ENCODE measurements at regions of chr4 and their contacts with region 1.

Region 1: GRCh38 chr4:83034630-83035494 is at the start of gene COPS4:
- DNase-seq: peak; percentile 90 to 98
- H3K4me3 ChIP-seq: peak within 1 kb of the TSS; percentile 82
- H3K27ac ChIP-seq: peak within 1 kb of the TSS; percentile 88
- H3K4me1 ChIP-seq: peaks cover 4% of the 10 kb centered on the region
- H3K27me3 ChIP-seq: no peaks in the 10 kb centered on the region
- CTCF ChIP-seq: peak; percentile 31; the same call in 1 of the 2 replicates
- total RNA-seq, gene COPS4: 15.4 and 17.1 TPM in 2 replicates

Region 2: GRCh38 chr4:82284858-82285805 is 749.7 kb before region 1 on chr4:
- CTCF ChIA-PET with region 1: no interaction called
- POLR2A ChIA-PET with region 1: interaction called, 18 read pairs
- intact Hi-C with region 1: no loop called
- DNase-seq: peak; percentile 93 to 97
- H3K4me3 ChIP-seq: peak overlapping the region; percentile 64
- H3K27ac ChIP-seq: no peak overlapping the region
- H3K4me1 ChIP-seq: no peaks in the 10 kb centered on the region
- H3K27me3 ChIP-seq: no peaks in the 10 kb centered on the region
- CTCF ChIP-seq: peak; percentile 89

Region 3: GRCh38 chr4:82373816-82374625 is 660.8 kb before region 1 on chr4 and contains the start of gene HNRNPD:
- CTCF ChIA-PET with region 1: no interaction called
- POLR2A ChIA-PET with region 1: interaction called, 3 read pairs
- intact Hi-C with region 1: loop called (anchors 10 kb)
- DNase-seq: peak; percentile 93 to 94
- H3K4me3 ChIP-seq: peak within 1 kb of the TSS; percentile 96
- H3K27ac ChIP-seq: peak within 1 kb of the TSS; percentile 95
- H3K4me1 ChIP-seq: peaks cover 31% of the 10 kb centered on the region
- H3K27me3 ChIP-seq: no peaks in the 10 kb centered on the region
- CTCF ChIP-seq: no peak
- total RNA-seq, gene HNRNPD: 165 and 221 TPM in 2 replicates

Region 4: GRCh38 chr4:82948647-82949204 is 86.1 kb before region 1 on chr4:
- CTCF ChIA-PET with region 1: no interaction called
- POLR2A ChIA-PET with region 1: interaction called, 31 read pairs
- intact Hi-C with region 1: no loop called
- DNase-seq: no peak
- H3K4me3 ChIP-seq: no peak overlapping the region
- H3K27ac ChIP-seq: no peak overlapping the region
- H3K4me1 ChIP-seq: no peaks in the 10 kb centered on the region
- H3K27me3 ChIP-seq: no peaks in the 10 kb centered on the region
- CTCF ChIP-seq: no peak

Region 5: DNA sequence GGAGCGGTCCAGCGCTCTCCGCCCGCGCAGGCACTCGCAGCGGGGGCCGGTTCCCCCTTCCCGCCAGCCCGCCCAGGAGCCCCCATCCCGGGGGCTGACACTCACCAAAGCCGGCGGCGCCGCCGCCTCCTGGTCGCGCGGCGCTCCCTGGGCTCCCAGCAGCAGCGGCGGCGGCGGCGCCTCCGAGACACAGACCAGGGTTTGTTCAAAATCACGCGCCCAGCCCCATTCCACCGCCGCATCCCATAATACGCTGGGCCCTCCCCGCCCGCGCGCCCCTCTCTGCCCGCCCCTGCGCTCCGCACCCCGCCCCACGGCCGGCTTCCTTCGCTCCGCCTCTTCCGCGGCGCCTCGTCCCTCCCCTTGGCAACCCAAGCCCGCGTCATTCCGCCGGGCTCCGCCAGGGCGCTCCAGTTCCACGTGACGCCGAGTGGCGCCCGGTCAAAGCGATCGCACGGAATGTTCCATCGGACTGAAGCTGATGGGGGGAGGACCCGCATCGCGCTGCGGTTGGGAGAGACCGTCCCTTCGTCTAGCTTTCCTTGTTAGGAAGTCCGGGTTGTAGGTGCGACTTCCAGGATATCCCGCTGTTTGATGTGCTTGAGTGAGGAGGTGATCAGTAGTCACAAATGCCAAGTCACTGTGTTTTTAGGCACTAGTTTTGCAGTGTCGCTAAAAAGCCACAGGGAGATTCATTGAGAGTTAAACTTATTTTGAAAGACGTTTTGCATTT is 22.0 kb before region 1 on chr4:
- CTCF ChIA-PET with region 1: interaction called, 5 read pairs
- POLR2A ChIA-PET with region 1: interaction called, 15 read pairs
- intact Hi-C with region 1: loop called (anchors 1 kb)
- DNase-seq: peak; percentile 90 to 94
- H3K4me3 ChIP-seq: peak overlapping the region; percentile 83
- H3K27ac ChIP-seq: peak overlapping the region; percentile 81
- H3K4me1 ChIP-seq: peaks cover 32% of the 10 kb centered on the region
- H3K27me3 ChIP-seq: no peaks in the 10 kb centered on the region
- CTCF ChIP-seq: no peak

Region 6: DNA sequence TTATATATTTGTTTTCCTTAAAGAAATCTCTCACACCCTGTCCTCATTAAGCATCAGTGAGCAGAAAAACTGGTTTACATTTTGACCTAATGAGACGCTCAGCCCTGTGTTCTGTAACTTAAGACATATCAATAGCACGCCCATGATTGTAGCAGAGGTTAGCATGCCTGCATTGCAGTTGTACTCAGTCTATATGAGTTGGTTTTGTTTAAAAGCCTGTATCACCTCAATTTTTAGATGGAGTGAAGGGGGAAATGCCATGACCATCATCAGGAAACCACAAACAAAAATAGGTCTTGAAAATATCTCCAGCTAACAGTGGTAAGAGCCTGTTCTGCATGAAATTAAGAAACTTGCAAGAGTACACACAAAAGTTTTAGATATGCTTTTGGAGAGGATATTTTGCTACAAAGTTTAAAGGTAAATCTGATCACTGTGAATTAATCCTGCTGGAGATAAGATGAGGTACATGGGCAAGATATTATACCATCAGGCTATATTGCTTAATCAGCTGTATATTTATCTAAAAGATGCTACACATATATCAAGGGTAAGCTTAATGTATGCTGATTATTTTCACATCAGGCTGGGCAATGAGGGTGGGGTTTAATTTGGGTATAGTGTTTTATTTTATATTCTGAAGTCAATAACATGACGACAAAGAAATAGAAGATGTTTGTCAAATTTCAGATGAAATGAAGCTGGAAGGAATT is 262.8 kb after region 1 on chr4:
- CTCF ChIA-PET with region 1: no interaction called
- POLR2A ChIA-PET with region 1: no interaction called
- intact Hi-C with region 1: no loop called
- DNase-seq: no peak
- H3K4me3 ChIP-seq: no peak overlapping the region
- H3K27ac ChIP-seq: no peak overlapping the region
- H3K4me1 ChIP-seq: no peaks in the 10 kb centered on the region
- H3K27me3 ChIP-seq: no peaks in the 10 kb centered on the region
- CTCF ChIP-seq: no peak

Region 7: GRCh38 chr4:83455281-83456129 is 420.6 kb after region 1 on chr4 and contains the starts of genes HELQ and MRPS18C:
- CTCF ChIA-PET with region 1: interaction called, 11 read pairs
- POLR2A ChIA-PET with region 1: interaction called, 3 read pairs
- intact Hi-C with region 1: loop called (anchors 10 kb)
- DNase-seq: peak; percentile 87 to 91
- H3K4me3 ChIP-seq: peak within 1 kb of the TSS; percentile 91
- H3K27ac ChIP-seq: peak within 1 kb of the TSS; percentile 76
- H3K4me1 ChIP-seq: peaks cover 14% of the 10 kb centered on the region
- H3K27me3 ChIP-seq: no peaks in the 10 kb centered on the region
- CTCF ChIP-seq: peak; percentile 47; the same call in 1 of the 2 replicates
- total RNA-seq, gene HELQ: 7.0 and 10.6 TPM in 2 replicates
- total RNA-seq, gene MRPS18C: 18.6 and 37.8 TPM in 2 replicates

Region 8: GRCh38 chr4:83548151-83548905 is 513.5 kb after region 1 on chr4:
- CTCF ChIA-PET with region 1: no interaction called
- POLR2A ChIA-PET with region 1: interaction called, 31 read pairs
- intact Hi-C with region 1: no loop called
- DNase-seq: peak; percentile 79 to 94
- H3K4me3 ChIP-seq: peak overlapping the region; percentile 21; the same call in 1 of the 2 replicates
- H3K27ac ChIP-seq: peak overlapping the region; percentile 100
- H3K4me1 ChIP-seq: peaks cover 61% of the 10 kb centered on the region
- H3K27me3 ChIP-seq: no peaks in the 10 kb centered on the region
- CTCF ChIP-seq: no peak

Measured in PC-9 (cell line).